ENCODE measurements at regions of chr16 and their contacts with region 1.

Region 1: DNA sequence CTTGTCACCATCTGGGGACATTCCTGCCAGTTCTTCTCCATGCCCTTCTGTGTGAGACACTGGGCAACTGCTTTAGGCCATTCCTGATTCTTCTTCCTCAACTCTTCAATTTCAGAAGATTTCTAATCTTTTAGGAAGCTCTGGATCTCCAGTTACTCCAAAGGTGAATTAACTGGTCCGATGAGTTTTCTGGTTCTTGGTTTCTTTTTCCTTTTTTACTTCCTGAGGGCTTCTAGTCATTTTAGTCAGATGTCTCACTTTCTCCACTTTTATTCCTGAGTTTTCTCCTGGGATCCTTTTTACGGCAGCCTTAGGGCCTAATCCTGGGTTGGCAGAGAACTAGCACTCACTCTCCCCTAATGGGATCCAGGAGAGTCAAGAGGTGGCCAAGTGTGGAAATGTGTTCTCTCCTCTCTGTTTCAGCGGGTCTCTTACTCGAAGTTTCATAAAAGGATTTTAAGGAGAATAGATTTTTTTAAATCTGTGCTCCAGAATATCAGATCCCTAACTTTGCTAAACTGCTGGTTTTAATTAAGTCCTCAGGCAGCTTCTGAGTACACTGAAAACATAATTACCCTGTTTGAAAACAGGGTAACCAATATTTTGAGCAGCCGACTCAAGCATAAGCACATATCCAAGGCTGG is 107.6 kb downstream of the RMI2 start:
- DNase-seq: no peak
- H3K4me3 ChIP-seq: no peak overlapping the region
- CTCF ChIP-seq: no peak

Region 2: DNA sequence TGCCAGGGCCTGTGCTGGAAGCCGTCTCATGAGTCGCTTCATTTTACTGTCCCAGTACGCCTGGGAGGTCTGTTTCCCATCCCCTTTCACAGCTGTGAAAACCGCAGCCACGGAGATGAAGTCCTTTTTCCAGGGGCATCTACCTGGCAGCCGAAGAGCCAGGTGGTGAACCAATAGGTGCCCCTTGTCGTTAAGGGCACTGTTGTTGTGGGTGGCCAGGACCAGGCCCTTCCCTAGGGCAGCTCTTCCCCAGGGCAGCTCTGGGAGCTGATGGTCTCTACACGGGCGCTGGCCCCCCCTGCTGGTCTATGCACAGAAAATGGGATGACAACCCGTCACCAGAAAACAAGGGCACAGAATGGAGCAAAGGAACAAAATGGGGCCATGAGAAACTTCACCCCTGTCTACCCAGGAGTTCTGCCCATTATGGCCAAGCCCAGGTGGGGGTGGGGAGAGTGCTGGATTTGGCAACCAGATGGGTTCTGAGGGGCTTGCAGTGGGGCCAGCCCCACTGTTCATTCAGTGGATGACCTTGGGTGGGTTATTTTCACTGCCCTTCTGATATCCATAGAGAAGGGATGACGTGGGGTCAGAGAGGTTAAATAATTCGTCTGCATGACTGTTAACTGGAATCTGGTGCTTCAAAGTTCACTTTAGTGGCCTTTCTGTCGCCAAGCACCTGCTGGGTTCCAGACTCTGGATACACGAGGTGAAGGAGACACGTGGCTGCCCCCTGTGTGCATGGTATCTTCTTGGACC is 96.1 kb before region 1 on chr16:
- in situ Hi-C with region 1: no loop called
- DNase-seq: no peak
- H3K4me3 ChIP-seq: no peak overlapping the region
- CTCF ChIP-seq: peak; percentile 81

Region 3: DNA sequence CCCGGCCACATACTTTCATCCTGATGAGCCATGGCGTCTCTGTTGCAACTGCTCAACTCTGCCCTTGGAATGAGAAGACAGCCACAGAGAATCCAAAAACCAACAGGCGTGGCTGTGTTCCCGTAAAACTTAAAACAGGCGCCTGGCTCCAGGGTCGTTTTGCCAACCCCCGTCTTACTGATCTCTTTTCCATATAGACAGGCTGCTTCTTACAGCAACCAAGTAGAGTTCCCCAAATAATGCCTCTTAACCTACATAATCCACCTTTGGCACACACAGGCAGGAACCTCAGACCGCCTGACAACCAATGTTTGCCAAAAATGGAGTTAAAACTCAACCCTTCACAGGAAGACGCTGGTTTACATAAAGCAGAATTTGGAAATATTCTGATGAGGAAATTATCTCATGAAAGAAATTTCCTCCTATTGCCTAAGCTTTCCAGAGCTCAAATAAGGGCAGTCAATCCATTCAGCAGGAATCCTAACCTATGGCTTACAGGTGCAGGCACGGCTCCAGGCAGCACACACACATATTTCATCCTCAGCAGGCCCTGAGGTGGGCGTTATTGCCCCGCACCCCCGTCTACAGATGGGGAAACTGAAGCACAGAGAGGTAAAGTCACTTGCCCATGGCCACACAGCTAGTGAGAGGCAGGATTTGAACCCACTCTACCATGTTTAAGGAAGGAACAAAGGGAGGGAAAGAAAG is 98.1 kb after region 1 on chr16:
- in situ Hi-C with region 1: loop called (anchors 5 kb)
- DNase-seq: no peak
- H3K4me3 ChIP-seq: no peak overlapping the region
- CTCF ChIP-seq: no peak

Measured in astrocyte of the cerebellum (primary cell).